Activated T-helper 2 cell treated with anti-CD3 and anti-CD28 coated beads, Interferon-gamma antibody, Interleukin-2, Interleukin-4, amounts not matched to agents 10 μg/mL and 5 μg/mL and 100 μg/mL, durations not matched to agents 14 hours and 24 hours and 36 hours (primary cell): ENCODE measurements at regions of chr3 and their contacts with region 1.

Region 1: DNA sequence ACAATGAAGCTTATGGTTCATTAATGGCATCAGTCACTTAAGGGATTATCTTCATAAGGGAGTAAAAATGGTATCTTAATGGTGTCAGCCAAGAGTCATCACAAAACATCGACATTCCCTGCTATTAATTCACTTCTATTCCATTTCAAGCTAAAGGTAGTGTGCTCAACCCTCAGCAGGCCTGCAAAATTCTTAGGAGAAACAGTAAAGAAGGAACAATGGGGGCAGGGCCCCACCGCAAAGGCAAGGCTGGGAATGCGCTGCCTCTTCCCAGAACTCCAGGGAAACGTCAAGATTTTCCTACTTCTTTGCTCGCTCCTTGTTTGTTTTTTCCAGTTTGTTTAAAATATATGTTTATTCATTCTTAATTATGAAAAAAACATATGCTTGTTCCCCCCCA is 187.3 kb upstream of the TSC22D2 start:
- DNase-seq: no peak
- H3K4me3 Mint-ChIP-seq: no peak overlapping the region
- H3K27ac Mint-ChIP-seq: no peak overlapping the region
- H3K4me1 Mint-ChIP-seq: peaks cover 2% of the 10 kb centered on the region
- H3K27me3 Mint-ChIP-seq: peaks cover 41% of the 10 kb centered on the region

Region 2: DNA sequence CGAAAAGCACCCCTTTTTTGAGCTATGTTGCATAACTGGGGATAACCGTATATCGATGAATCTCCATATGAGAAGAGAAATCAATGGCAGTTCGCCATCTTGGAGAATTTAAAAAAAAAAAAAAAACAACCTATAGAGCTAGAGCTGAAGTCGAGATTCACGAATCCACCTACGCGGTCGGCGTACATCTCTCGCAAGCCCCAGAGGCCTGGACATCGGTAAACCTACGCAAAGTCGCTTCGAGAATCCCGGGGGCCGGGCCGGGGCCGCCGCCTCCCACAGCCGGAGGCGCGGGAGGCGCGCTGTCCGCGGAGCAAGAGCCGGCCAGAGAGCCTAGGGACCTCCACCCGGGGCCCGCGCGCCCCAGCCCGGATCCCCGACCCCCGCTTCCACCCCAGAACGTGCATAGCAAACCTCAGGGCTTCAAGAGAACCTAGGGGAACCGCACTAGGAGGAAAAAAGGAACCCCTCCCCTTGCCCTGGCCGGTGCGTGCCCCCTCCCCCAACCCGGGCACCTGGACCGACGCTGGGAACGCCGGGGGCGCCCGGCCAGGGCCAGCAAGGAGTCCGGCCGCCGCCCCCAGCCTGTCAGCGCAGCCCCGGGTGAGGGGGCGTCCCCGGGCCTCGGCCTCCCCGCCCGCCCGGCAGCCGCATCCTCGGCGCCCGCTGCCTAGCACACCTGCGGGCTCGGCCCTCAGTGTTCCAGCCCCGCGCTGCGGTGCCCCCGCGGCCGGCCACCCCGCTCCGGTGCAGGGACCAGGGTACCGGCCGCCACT is 250.7 kb before region 1 on chr3:
- intact Hi-C with region 1: loop called (anchors 1 kb)
- DNase-seq: peak; percentile 63
- H3K4me3 Mint-ChIP-seq: peak overlapping the region; percentile 76
- H3K27ac Mint-ChIP-seq: no peak overlapping the region
- H3K4me1 Mint-ChIP-seq: peaks cover 12% of the 10 kb centered on the region
- H3K27me3 Mint-ChIP-seq: peaks cover 51% of the 10 kb centered on the region

Region 3: GRCh38 chr3:150555859-150556436 is 335.1 kb after region 1 on chr3:
- intact Hi-C with region 1: no loop called
- DNase-seq: no peak
- H3K4me3 Mint-ChIP-seq: no peak overlapping the region
- H3K27ac Mint-ChIP-seq: no peak overlapping the region
- H3K4me1 Mint-ChIP-seq: peaks cover 39% of the 10 kb centered on the region
- H3K27me3 Mint-ChIP-seq: no peaks in the 10 kb centered on the region